ENCODE measurements at regions of chr10 and their contacts with region 1.

Region 1: GRCh38 chr10:47384148-47384921 is at the start of gene ZNF488:
- DNase-seq: no peak
- ATAC-seq: peak; percentile 98
- H3K4me3 ChIP-seq: peak within 1 kb of the TSS; percentile 61
- H3K27ac ChIP-seq: no peak within 1 kb of the TSS
- H3K4me1 ChIP-seq: no peaks in the 10 kb centered on the region
- H3K27me3 ChIP-seq: peaks cover 0 to 4% of the 10 kb centered on the region in 2 experiments; a peak in 3 of 4 replicates
- CTCF ChIP-seq: no peak
- EP300 ChIP-seq: no peak
- POLR2A ChIP-seq: no peak; the same call in 1 of the 2 replicates
- RAD21 ChIP-seq: no peak
- polyA plus RNA-seq, gene ZNF488: not detected

Region 2: GRCh38 chr10:46106410-46107255 is 1277.7 kb before region 1 on chr10:
- CTCF ChIA-PET with region 1: no interaction called
- POLR2A ChIA-PET with region 1: no interaction called
- RAD21 ChIA-PET with region 1: no interaction called
- SMC1A ChIA-PET with region 1: no interaction called
- in situ Hi-C with region 1: loop called (anchors 5 kb)
- intact Hi-C with region 1: no loop called
- DNase-seq: no peak
- ATAC-seq: peak; percentile 96
- H3K4me3 ChIP-seq: peak overlapping the region; percentile 60; the same call in 1 of the 2 replicates
- H3K27ac ChIP-seq: no peak overlapping the region
- H3K4me1 ChIP-seq: no peaks in the 10 kb centered on the region
- H3K27me3 ChIP-seq: peaks cover 0 to 5% of the 10 kb centered on the region in 2 experiments; a peak in 1 of 4 replicates
- CTCF ChIP-seq: no peak
- EP300 ChIP-seq: no peak
- POLR2A ChIP-seq: no peak
- RAD21 ChIP-seq: no peak

Region 3: DNA sequence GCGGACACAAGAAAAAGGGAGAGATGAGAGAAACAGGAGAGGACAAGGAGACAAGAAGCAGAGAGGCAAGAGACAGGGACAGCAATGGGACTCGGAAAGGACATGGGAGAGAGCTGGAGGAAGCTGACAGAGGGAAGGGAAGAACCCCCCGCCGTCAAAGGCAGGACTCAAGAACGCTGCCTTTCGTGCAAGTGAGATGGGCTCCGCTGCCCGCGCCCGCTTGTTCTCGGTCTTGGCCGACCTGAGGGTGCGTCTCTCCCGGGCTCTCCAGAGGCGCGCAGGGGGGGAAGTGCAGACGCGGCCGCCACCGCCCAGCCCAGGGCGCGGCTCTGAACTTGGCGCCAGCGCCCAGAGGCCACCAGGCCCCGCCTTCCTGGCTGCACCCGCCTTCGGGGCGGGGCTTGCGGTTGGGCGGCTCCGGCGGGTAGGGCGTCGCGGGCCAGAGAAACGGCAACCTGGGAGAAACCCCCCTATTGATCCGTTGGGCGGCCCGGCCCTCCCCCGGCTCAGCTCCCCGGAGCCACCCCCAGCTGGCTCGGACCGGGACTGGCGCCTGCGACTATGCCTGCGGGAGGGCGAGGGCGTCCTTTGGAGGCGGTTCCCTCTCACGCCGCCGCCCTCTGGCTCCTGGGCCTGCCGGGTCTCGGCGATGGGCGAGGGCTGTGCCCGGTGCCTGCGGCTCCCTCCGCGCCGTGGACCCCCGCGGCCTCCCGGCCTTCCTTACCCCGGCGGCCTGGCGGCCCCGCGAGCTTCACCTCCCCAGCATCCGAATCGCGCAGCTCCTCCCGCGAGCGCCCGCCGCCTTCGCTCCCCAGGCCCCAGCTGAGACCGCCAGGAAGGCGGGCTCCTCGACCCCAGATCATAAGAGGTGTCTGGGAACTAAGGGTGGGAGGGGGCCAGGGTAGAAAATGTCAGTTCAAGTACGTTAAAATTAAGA is 1099.8 kb before region 1 on chr10:
- CTCF ChIA-PET with region 1: no interaction called
- POLR2A ChIA-PET with region 1: no interaction called
- RAD21 ChIA-PET with region 1: no interaction called
- SMC1A ChIA-PET with region 1: no interaction called
- in situ Hi-C with region 1: loop called (anchors 5 kb)
- intact Hi-C with region 1: no loop called
- DNase-seq: no peak
- ATAC-seq: peak; percentile 97
- H3K4me3 ChIP-seq: peak overlapping the region; percentile 61
- H3K27ac ChIP-seq: no peak overlapping the region
- H3K4me1 ChIP-seq: peaks cover 2% of the 10 kb centered on the region; the same call in 1 of the 2 replicates
- H3K27me3 ChIP-seq: peaks cover 0 to 9% of the 10 kb centered on the region in 2 experiments; a peak in 3 of 4 replicates
- CTCF ChIP-seq: no peak
- EP300 ChIP-seq: no peak
- POLR2A ChIP-seq: peak; percentile 62; the same call in 1 of the 2 replicates
- RAD21 ChIP-seq: no peak

Region 4: DNA sequence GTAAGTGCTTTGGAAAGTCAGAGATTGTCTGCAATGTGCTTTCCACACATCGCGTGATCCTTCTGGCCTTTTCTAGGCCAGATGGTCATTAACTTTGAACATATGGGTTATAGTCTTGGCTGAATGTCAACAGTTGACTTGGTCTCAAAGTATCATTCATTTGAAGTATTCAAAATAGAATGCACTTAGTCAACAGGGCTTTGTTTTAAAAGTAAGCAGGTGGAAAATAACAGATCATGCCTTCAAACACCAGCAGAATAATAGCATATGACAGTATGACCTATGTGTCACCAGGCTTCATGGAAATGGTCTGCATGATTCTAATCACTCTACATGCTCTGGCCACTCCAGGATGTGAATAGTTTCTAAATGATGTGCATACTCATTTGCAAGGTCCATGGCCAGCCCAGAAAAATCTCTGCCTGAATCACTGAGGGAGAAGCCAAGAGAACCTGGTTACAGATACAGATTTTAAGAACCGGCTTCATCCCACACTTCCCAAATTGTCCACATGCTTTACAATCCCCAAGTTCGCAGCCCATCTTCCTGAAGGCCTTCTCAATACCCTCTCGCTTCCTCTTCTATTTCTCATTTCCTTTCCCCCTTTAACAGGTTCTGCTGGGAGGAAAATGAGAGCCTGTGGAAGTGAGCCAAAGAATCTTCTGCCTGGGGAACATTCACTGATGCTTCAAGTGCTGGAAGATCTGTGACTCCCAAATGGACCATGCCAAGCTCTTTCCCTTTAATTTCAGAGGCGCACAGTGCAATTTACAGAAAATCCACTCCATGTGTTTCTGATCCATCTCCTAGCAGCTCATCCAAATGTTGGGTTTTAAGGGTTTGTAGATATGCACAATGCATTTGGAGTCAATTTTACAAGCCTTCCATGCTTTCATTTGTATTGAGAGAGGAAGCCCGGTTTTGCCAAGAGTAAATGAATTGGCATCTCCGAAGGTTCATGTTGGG is 207.1 kb before region 1 on chr10:
- CTCF ChIA-PET with region 1: no interaction called
- POLR2A ChIA-PET with region 1: no interaction called
- RAD21 ChIA-PET with region 1: no interaction called
- SMC1A ChIA-PET with region 1: no interaction called
- in situ Hi-C with region 1: no loop called
- intact Hi-C with region 1: no loop called
- DNase-seq: no peak
- ATAC-seq: no peak
- H3K4me3 ChIP-seq: no peak overlapping the region
- H3K27ac ChIP-seq: no peak overlapping the region
- H3K4me1 ChIP-seq: no peaks in the 10 kb centered on the region
- H3K27me3 ChIP-seq: no peaks in the 10 kb centered on the region; a peak in 1 of 4 replicates
- CTCF ChIP-seq: no peak
- EP300 ChIP-seq: no peak
- POLR2A ChIP-seq: no peak
- RAD21 ChIP-seq: no peak

Region 5: GRCh38 chr10:47402641-47403301 is 18.4 kb after region 1 on chr10:
- CTCF ChIA-PET with region 1: no interaction called
- POLR2A ChIA-PET with region 1: no interaction called
- RAD21 ChIA-PET with region 1: no interaction called
- SMC1A ChIA-PET with region 1: no interaction called
- in situ Hi-C with region 1: no loop called
- intact Hi-C with region 1: no loop called
- DNase-seq: no peak
- ATAC-seq: no peak
- H3K4me3 ChIP-seq: no peak overlapping the region
- H3K27ac ChIP-seq: no peak overlapping the region
- H3K4me1 ChIP-seq: no peaks in the 10 kb centered on the region
- H3K27me3 ChIP-seq: no peaks in the 10 kb centered on the region; a peak in 1 of 4 replicates
- CTCF ChIP-seq: no peak
- EP300 ChIP-seq: no peak
- POLR2A ChIP-seq: no peak
- RAD21 ChIP-seq: no peak

Region 6: GRCh38 chr10:47435081-47435480 is 50.7 kb after region 1 on chr10:
- CTCF ChIA-PET with region 1: no interaction called
- POLR2A ChIA-PET with region 1: no interaction called
- RAD21 ChIA-PET with region 1: no interaction called
- SMC1A ChIA-PET with region 1: no interaction called
- in situ Hi-C with region 1: no loop called
- intact Hi-C with region 1: no loop called
- DNase-seq: no peak
- ATAC-seq: no peak
- H3K4me3 ChIP-seq: no peak overlapping the region
- H3K27ac ChIP-seq: no peak overlapping the region
- H3K4me1 ChIP-seq: no peaks in the 10 kb centered on the region
- H3K27me3 ChIP-seq: no peaks in the 10 kb centered on the region
- CTCF ChIP-seq: no peak
- EP300 ChIP-seq: no peak
- POLR2A ChIP-seq: no peak
- RAD21 ChIP-seq: no peak

Measured in GM12878 (cell line).